ENCODE measurements at regions of chr17 and their contacts with region 1.

Region 1: GRCh38 chr17:67406912-67407311 is 29.8 kb downstream of the PITPNC1 start:
- DNase-seq: no peak
- H3K4me3 ChIP-seq: no peak overlapping the region
- H3K27ac ChIP-seq: no peak overlapping the region
- H3K4me1 ChIP-seq: no peaks in the 10 kb centered on the region
- H3K27me3 ChIP-seq: no peaks in the 10 kb centered on the region
- CTCF ChIP-seq: no peak
- POLR2A ChIP-seq: no peak

Region 2: DNA sequence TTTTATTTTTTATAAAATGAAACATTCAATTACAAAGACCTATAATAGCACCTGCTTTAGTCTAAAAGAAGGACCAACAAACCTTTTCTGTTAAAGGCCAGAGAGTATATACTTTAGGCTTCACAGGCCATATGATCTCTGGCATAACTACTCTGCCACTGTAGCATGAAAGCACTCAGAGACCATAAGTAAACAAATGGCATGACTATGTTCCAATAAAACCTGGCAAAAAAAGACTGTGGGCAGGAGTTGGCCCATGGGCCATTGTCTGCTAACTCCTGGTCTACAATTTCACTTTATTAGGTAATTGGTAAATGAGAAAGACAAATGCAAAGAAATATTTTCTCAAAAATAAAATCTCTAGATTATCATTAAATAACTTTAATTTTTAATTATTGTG is 1229.9 kb before region 1 on chr17:
- intact Hi-C with region 1: no loop called
- DNase-seq: no peak
- H3K4me3 ChIP-seq: no peak overlapping the region
- H3K27ac ChIP-seq: no peak overlapping the region
- H3K4me1 ChIP-seq: no peaks in the 10 kb centered on the region
- H3K27me3 ChIP-seq: no peaks in the 10 kb centered on the region
- CTCF ChIP-seq: no peak
- POLR2A ChIP-seq: no peak

Region 3: DNA sequence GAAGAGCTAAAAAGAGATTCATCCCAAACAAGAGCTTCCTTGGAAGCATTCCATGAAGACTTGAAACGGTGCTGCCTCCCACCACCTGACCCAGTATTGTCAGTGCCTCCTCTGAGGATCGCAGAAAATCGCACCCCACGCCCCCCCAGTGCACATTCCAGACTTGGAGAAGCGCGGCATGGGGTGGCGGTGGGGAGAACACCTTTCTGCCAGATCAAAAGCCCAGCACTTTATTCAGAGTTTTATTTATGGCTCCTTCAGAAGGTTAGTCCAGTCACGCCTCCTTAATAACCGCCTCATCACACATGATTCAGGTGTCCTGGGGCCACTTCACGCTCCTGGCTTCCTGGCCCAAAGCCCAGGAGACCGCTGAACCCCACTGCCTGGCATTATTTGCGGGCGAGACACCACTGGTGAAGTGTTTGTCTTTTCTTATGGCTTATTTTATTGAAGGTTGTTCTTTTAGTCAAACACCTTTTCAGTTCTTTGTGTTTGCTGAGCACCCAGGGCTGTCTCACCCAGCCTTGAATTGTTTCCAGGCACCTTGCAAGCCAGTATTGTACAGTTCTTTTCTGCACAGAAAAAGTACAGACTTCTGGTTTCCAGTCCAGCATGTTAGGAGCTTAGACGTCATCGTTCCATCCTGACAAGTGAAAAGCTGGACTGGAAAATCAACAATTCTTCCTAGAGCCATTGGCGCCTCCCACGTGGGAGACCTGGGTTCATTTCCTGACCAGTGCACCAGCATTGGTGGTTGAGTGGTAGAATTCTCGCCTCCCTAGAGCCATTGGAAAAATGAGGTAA is 651.6 kb before region 1 on chr17:
- intact Hi-C with region 1: no loop called
- DNase-seq: no peak
- H3K4me3 ChIP-seq: no peak overlapping the region
- H3K27ac ChIP-seq: no peak overlapping the region
- H3K4me1 ChIP-seq: no peaks in the 10 kb centered on the region
- H3K27me3 ChIP-seq: no peaks in the 10 kb centered on the region
- CTCF ChIP-seq: no peak
- POLR2A ChIP-seq: no peak

Region 4: DNA sequence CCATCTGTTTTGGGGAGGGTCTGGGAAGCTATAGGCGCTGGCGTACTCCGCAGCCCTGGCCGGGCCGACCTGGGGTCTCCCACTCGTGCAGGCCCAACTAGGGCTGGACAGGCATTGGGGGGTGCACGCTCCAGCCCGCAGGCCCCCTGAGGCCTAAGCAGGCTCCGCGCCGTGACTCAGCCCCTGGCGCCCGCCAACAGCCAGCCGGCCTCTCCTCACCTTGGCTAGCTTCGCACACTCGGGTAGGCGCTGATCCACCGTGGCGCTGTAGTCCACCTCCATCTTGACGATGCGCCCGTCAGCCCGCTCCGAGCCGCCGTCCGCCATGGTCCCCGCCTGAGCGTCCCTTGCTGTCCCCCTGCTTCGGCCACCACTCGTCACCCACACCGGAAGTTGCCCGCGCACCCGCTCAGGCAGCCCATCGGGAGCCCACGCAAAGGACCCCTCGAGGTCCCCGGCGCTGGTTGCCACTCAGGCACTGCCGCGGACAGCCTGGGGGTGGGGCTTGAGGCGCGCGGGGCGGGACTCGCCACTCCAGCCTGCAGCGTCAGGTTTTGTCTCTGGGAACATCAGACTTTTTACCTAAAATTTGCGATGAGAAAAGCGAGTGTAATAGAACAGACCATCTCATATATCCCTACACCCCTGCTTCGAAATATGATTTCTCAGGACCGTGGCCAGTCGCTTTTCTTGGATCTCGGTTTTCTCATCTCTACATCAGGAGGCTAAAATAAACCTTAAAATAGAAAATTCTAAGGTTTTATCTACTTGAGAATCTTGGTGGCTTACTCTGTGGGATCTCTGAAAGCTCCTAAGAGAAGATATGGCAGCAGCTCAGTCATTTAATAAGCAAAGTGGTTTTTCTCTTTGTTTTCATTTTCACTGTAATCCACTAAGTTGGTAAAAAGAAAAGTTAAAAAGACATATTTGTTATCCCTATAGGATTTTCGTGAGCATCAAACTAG is 40.4 kb before region 1 on chr17 and contains the start of gene PSMD12:
- intact Hi-C with region 1: no loop called
- DNase-seq: peak; percentile 91 to 92
- H3K4me3 ChIP-seq: peak within 1 kb of the TSS; percentile 89 to 99 (median 95)
- H3K27ac ChIP-seq: peak within 1 kb of the TSS; percentile 93 to 95
- H3K4me1 ChIP-seq: no peaks in the 10 kb centered on the region
- H3K27me3 ChIP-seq: no peaks in the 10 kb centered on the region
- CTCF ChIP-seq: no peak
- POLR2A ChIP-seq: peak; percentile 53
- total RNA-seq, gene PSMD12: 21.2 to 33.6 (median 30.5) TPM

Region 5: DNA sequence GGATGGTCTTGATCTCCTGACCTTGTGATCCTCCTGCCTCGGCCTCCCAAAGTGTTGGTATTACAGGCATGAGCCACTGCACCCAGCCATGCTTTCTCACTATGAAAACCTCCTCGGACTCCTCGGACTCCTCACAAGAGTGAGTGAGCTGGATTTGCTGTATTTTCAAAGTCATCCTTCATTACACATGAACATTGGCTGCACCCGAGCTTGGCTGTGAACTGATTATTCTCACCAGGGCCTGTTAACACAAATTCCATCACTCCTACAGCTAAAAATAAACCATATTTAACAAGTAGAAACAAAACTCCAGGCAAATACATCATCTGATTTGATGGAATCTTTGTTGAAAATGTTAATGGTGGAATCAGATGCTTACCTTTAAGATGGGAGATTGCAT is 20.5 kb after region 1 on chr17:
- intact Hi-C with region 1: loop called (anchors 2 kb)
- DNase-seq: no peak
- H3K4me3 ChIP-seq: no peak overlapping the region
- H3K27ac ChIP-seq: no peak overlapping the region
- H3K4me1 ChIP-seq: peaks cover 0 to under 1% of the 10 kb centered on the region in 2 donors
- H3K27me3 ChIP-seq: no peaks in the 10 kb centered on the region
- CTCF ChIP-seq: no peak
- POLR2A ChIP-seq: no peak